Left ventricle myocardium superior (tissue), 1 donor: ENCODE measurements at regions of chr15 and their contacts with region 1.

Region 1: GRCh38 chr15:25508369-25509002 is 69.7 kb upstream of the UBE3A start:
- DNase-seq: no peak
- ATAC-seq: peak; percentile 52

Region 2: DNA sequence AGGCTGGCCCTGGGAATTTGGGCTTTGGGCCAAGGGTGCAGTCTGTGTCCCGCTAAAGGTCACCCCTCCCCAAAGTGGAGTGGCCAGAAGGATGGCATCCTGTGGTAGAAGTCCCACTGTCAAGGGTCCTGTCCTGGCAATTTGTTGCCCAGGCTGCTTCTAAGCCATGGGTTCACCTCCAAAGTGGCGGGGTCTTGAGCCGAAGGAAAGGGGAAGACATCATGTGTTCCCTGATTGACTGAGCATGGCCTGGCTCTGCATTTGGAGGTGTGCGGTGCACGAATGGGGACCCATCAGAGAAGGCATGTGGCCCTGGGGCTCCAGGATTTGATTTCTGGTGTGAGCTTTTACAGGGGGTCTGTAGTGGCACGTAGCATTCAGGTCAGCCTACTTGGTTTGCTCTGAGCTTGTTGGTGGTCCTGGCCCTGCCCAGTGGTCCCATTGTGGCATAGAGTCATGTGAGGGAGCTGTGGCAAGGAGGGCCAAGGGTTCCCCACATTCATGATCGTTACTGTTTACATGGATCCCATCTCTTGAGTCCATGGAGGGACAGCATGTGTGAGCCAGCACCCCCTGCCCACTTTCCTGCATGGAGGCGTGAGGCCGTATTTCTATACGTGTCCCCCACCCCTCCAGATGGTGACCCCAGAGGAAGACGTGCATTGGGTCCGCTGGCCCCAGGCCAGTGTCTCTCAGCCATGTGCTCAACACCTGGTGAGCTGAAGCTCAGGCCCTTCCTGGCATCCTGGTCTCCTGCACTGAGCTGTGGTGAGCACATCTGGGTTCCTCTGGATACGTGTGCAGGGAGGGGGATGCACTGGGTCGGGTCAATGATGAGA is 328.6 kb before region 1 on chr15:
- intact Hi-C with region 1: no loop called
- DNase-seq: peak; percentile 10
- ATAC-seq: no peak

Region 3: DNA sequence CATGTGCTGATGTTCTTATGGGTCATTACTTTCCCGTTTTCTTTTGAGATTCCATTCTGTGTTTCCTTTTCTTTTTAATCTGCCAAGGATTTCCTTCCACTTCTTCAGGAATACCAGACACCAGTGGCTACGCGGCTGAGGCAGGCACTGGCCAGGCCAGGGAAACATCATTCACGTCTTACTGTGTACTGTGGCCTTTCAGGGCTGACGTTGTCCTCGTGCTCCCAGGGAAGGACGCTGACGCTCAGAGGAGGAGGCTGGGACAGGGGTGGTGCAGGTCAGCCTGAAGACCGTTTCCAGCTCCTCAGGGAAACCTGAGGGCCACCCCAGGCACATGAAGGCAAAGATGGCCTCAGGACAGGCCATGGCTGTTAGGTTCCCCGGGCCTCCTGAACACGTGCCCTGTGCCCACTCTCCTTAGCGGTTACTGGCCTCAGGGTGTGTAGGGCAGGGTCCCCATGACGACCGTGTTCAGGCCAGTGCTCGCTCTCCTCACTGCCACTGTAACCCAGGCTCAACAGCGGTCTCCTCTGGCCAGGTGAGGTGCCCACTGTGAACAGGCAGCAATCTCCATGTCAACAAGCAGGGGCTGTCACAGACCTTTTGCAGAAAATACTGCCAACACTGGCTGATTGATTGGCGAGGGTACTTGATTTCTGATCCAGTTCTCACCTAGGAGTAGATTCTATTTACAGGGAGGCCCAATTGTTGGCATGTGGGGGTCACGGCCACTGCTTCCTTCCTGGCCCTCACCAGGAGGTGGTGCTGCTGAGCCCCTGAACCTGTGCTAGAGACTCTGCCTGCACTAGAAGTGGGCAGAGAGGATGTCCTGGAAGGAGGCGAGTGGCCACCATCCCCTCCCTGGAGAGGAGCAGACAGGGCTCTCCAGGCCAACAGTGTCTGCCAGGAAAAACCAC is 185.1 kb after region 1 on chr15:
- intact Hi-C with region 1: loop called (anchors 10 kb)
- DNase-seq: peak; percentile 61
- ATAC-seq: peak; percentile 62

Region 4: GRCh38 chr15:26260517-26261133 is 752.1 kb after region 1 on chr15:
- intact Hi-C with region 1: loop called (anchors 5 kb)
- DNase-seq: peak; percentile 52
- ATAC-seq: no peak